Mammary epithelial cell (primary cell): ENCODE measurements at regions of chrX and their contacts with region 1.

Region 1: DNA sequence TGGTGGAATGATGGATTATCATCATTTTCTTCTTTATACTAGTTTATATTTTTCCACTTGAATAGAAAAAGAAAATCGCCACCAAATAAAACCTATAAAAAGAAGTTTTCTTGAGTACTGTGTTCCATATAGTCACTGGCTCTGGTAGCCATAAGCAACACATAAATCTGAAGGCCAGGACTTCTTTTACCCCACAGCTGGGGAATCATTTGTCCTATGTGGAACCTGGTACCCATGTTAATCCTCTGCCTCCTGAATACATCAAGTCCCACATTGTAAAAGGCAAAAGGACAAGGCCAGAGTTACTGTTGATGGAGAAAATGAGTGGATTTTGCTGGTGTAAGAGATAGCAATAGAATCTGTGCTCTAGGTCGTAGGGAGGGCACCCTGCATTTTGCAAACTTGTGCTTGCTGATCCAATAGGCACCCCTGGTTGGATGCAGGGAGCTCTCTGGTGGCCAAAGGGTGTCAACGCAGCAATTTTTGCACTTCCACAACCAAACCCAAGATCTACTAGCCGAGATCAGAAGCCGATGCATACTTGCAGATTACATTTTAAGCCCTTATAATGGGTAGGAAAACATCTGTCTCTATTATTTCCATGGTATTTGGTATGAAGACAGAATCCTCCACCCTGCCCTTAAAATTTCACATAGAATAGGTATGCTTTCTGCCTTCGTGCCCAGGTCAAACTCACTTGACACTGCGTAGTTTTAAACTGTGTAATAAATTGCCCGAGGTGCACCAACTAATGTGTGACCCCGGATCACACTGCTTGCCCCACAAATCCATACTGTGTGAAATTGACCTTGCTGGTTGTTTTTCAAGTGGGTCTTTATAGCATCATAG is 146.2 kb upstream of the SCML1 start:
- DNase-seq: peak; percentile 64
- H3K4me3 ChIP-seq: peak overlapping the region in 2 of 3 experiments; percentile 19 to 28
- H3K27ac ChIP-seq: peak overlapping the region; percentile 18
- H3K4me1 ChIP-seq: peaks cover 33% of the 10 kb centered on the region
- H3K27me3 ChIP-seq: no peaks in the 10 kb centered on the region
- CTCF ChIP-seq: peak; percentile 88 to 94

Region 2: GRCh38 chrX:17120816-17121215 is 470.3 kb before region 1 on chrX:
- CTCF ChIA-PET with region 1: no interaction called
- dilution Hi-C with region 1: no loop called
- in situ Hi-C with region 1: no loop called
- intact Hi-C with region 1: loop called (anchors 1 kb)
- DNase-seq: no peak
- H3K4me3 ChIP-seq: no peak overlapping the region
- H3K27ac ChIP-seq: no peak overlapping the region
- H3K4me1 ChIP-seq: no peaks in the 10 kb centered on the region
- H3K27me3 ChIP-seq: no peaks in the 10 kb centered on the region
- CTCF ChIP-seq: no peak

Region 3: DNA sequence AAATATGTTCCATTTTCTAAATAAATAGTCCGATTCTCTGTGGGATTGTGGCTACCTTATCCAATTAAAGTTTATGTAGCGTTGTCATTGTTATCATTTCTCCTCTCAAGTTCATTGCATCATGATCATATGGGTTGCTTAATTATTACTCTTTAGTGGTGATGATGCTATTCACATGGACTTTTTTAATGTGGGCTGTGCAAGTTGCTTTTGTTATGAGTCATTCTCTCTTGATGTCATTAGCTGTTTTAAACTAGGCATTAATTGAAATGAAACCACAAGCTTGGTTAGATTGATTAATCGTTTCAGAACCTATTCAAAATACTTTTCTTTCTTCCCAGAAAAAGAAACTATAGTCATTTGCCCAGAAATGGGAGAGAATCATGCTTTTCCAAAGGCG is 177.9 kb before region 1 on chrX:
- CTCF ChIA-PET with region 1: no interaction called
- dilution Hi-C with region 1: no loop called
- in situ Hi-C with region 1: loop called in 1 of 2 experiments (anchors 25 kb)
- intact Hi-C with region 1: loop called (anchors 1 kb)
- DNase-seq: peak; percentile 91
- H3K4me3 ChIP-seq: no peak overlapping the region
- H3K27ac ChIP-seq: peak overlapping the region; percentile 95
- H3K4me1 ChIP-seq: peaks cover 46% of the 10 kb centered on the region
- H3K27me3 ChIP-seq: no peaks in the 10 kb centered on the region
- CTCF ChIP-seq: no peak

Region 4: DNA sequence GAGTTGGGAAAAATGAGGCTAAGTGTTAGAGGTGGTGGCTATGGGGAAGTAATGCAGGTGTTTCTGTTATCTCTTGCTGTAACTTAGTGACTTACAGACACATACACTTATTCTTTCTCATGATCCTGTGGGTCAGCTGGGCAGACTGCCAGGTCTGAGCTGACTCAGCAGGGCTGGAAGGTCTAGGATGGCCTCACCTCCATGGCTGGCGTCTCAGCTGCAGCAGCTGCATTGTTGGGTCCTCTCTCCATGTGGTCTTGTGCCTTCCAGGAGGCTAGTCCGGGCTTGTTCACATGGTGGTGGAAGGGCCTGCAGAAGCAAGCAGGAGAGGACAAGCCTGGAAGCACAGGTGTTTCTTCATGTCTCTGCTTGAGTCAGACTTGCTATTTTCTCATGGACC is 43.5 kb before region 1 on chrX:
- CTCF ChIA-PET with region 1: no interaction called
- dilution Hi-C with region 1: no loop called
- in situ Hi-C with region 1: loop called in 1 of 2 experiments (anchors 5 kb)
- intact Hi-C with region 1: no loop called
- DNase-seq: peak; percentile 99
- H3K4me3 ChIP-seq: no peak overlapping the region
- H3K27ac ChIP-seq: peak overlapping the region; percentile 63
- H3K4me1 ChIP-seq: peaks cover 50% of the 10 kb centered on the region
- H3K27me3 ChIP-seq: no peaks in the 10 kb centered on the region
- CTCF ChIP-seq: no peak

Region 5: DNA sequence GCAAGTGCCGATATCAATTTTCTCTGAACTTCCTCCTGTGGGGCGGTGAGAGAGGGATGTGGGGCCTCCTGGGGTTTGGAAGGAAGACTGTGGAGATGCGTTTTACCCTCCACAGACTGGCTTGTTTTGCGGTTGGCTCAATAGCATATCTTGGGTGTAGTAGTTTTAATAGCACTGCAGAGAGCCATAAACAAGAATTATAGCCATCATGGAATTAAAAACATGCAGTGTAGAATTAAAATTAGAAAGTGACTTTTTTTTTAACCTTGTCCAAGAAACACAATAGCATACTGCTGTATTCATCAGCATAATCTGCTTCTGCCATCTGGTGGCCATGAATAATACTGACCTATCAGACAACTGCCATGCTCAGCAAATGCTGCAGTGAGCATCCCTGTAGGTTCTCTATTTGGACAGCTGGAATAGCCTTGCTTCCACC is 98.9 kb after region 1 on chrX:
- CTCF ChIA-PET with region 1: no interaction called
- dilution Hi-C with region 1: no loop called
- in situ Hi-C with region 1: loop called in 1 of 2 experiments (anchors 10 kb)
- intact Hi-C with region 1: loop called (anchors 2 kb)
- DNase-seq: peak; percentile 49
- H3K4me3 ChIP-seq: no peak overlapping the region
- H3K27ac ChIP-seq: no peak overlapping the region
- H3K4me1 ChIP-seq: no peaks in the 10 kb centered on the region
- H3K27me3 ChIP-seq: no peaks in the 10 kb centered on the region
- CTCF ChIP-seq: peak; percentile 73 to 75